Calu3 (cell line): ENCODE measurements at regions of chr11 and their contacts with region 1.

Region 1: GRCh38 chr11:15769203-15769602 is 587.1 kb downstream of the SOX6 start:
- DNase-seq: peak; percentile 54
- H3K4me3 Mint-ChIP-seq: peak overlapping the region; percentile 31
- H3K27ac Mint-ChIP-seq: peak overlapping the region; percentile 73
- H3K4me1 Mint-ChIP-seq: peaks cover 55% of the 10 kb centered on the region
- H3K27me3 Mint-ChIP-seq: no peaks in the 10 kb centered on the region
- CTCF ChIP-seq: no peak

Region 2: DNA sequence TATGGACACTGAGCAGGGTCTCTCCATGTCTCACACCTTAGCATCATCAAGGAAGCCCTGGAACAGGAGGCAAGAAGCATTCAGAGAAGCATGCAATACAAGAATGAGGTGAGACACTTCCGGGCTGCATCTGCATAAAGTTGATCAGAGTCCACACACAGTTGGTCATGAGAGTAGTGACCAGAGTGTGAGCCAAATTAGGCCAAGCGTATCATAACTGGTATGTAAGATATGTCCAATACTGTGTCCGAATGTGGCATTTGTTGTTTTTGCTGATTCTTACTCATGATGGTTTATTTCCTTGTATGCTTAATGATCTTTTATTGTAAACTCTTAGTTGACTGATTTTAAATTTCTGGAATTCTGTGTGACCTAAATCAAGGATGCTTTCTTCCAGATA is 338.8 kb before region 1 on chr11:
- CTCF ChIA-PET with region 1: no interaction called
- intact Hi-C with region 1: no loop called
- DNase-seq: no peak
- H3K4me3 Mint-ChIP-seq: no peak overlapping the region
- H3K27ac Mint-ChIP-seq: no peak overlapping the region
- H3K4me1 Mint-ChIP-seq: no peaks in the 10 kb centered on the region
- H3K27me3 Mint-ChIP-seq: peaks cover 17% of the 10 kb centered on the region
- CTCF ChIP-seq: no peak

Region 3: DNA sequence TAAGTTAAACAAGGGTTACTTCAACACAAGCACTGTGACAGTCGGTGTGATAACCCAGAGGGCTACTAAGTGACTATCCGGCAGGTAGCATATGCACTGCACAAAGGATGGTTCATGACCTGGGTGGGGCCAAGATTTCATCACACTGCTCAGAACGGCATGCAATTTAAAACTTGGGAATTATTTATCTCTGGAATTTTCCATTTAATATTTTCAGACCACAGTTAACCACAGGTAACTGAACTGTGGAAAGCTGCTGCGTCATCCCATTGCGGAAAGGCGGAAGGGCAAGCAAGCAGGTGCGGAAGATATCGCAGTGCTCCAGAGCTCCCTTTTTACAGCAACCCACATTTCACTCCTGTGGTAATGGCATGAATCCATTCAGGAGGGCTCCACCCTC is 113.7 kb before region 1 on chr11:
- CTCF ChIA-PET with region 1: no interaction called
- intact Hi-C with region 1: loop called (anchors 2 kb)
- DNase-seq: peak; percentile 35
- H3K4me3 Mint-ChIP-seq: no peak overlapping the region
- H3K27ac Mint-ChIP-seq: peak overlapping the region; percentile 71
- H3K4me1 Mint-ChIP-seq: peaks cover 41% of the 10 kb centered on the region
- H3K27me3 Mint-ChIP-seq: no peaks in the 10 kb centered on the region
- CTCF ChIP-seq: no peak

Region 4: GRCh38 chr11:15720460-15720859 is 48.7 kb before region 1 on chr11:
- CTCF ChIA-PET with region 1: no interaction called
- intact Hi-C with region 1: no loop called
- DNase-seq: no peak
- H3K4me3 Mint-ChIP-seq: no peak overlapping the region
- H3K27ac Mint-ChIP-seq: no peak overlapping the region
- H3K4me1 Mint-ChIP-seq: no peaks in the 10 kb centered on the region
- H3K27me3 Mint-ChIP-seq: peaks cover 35% of the 10 kb centered on the region
- CTCF ChIP-seq: no peak

Region 5: GRCh38 chr11:15937601-15938120 is 168.5 kb after region 1 on chr11:
- CTCF ChIA-PET with region 1: no interaction called
- intact Hi-C with region 1: no loop called
- DNase-seq: no peak
- H3K4me3 Mint-ChIP-seq: no peak overlapping the region
- H3K27ac Mint-ChIP-seq: no peak overlapping the region
- H3K4me1 Mint-ChIP-seq: peaks cover 16% of the 10 kb centered on the region
- H3K27me3 Mint-ChIP-seq: no peaks in the 10 kb centered on the region
- CTCF ChIP-seq: no peak